ENCODE measurements at regions of chr2 and their contacts with region 1.

Region 1: GRCh38 chr2:38947240-38948239 is 57.9 kb downstream of the ARHGEF33 start:
- DNase-seq: peak; percentile 88
- H3K4me3 Mint-ChIP-seq: no peak overlapping the region
- H3K27ac Mint-ChIP-seq: peak overlapping the region; percentile 32
- H3K4me1 Mint-ChIP-seq: peaks cover 8% of the 10 kb centered on the region
- H3K27me3 Mint-ChIP-seq: no peaks in the 10 kb centered on the region
- CTCF ChIP-seq: peak; percentile 71

Region 2: DNA sequence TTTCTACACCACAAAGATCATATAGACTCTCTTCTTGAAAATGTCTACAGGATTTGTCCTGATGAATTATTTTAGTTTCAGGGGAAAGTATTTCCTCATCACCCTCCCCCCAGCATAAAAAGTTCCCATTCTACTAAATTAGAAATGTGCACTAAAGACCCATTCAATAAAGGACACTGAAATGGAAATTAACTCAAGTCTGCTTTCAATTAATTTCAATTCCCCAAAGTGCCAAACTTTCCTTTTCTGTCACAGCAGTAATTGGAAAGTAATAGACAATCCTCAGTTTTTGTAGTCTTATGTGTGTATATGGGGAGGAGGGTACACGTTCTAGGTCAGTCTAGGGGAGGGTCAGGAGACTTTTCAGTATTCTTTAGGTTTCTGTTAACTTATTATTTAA is 36.3 kb before region 1 on chr2:
- CTCF ChIA-PET with region 1: interaction called, 10 read pairs
- POLR2A ChIA-PET with region 1: no interaction called
- intact Hi-C with region 1: no loop called
- DNase-seq: no peak
- H3K4me3 Mint-ChIP-seq: no peak overlapping the region
- H3K27ac Mint-ChIP-seq: no peak overlapping the region
- H3K4me1 Mint-ChIP-seq: peaks cover 5% of the 10 kb centered on the region
- H3K27me3 Mint-ChIP-seq: no peaks in the 10 kb centered on the region
- CTCF ChIP-seq: no peak

Region 3: GRCh38 chr2:38957972-38958371 is 10.4 kb after region 1 on chr2:
- CTCF ChIA-PET with region 1: interaction called, 13 read pairs
- POLR2A ChIA-PET with region 1: interaction called, 3 read pairs
- intact Hi-C with region 1: no loop called
- DNase-seq: no peak
- H3K4me3 Mint-ChIP-seq: no peak overlapping the region
- H3K27ac Mint-ChIP-seq: no peak overlapping the region
- H3K4me1 Mint-ChIP-seq: no peaks in the 10 kb centered on the region
- H3K27me3 Mint-ChIP-seq: no peaks in the 10 kb centered on the region
- CTCF ChIP-seq: no peak

Region 4: GRCh38 chr2:39008665-39009064 is 61.1 kb after region 1 on chr2:
- CTCF ChIA-PET with region 1: interaction called, 13 read pairs
- POLR2A ChIA-PET with region 1: no interaction called
- intact Hi-C with region 1: no loop called
- DNase-seq: no peak
- H3K4me3 Mint-ChIP-seq: no peak overlapping the region
- H3K27ac Mint-ChIP-seq: peak overlapping the region; percentile 54
- H3K4me1 Mint-ChIP-seq: peaks cover 5% of the 10 kb centered on the region
- H3K27me3 Mint-ChIP-seq: no peaks in the 10 kb centered on the region
- CTCF ChIP-seq: no peak

Region 5: GRCh38 chr2:39227628-39228412 is 280.3 kb after region 1 on chr2:
- CTCF ChIA-PET with region 1: interaction called, 94 read pairs
- POLR2A ChIA-PET with region 1: no interaction called
- intact Hi-C with region 1: loop called (anchors 1 kb)
- DNase-seq: peak; percentile 65
- H3K4me3 Mint-ChIP-seq: no peak overlapping the region
- H3K27ac Mint-ChIP-seq: no peak overlapping the region
- H3K4me1 Mint-ChIP-seq: peaks cover 5% of the 10 kb centered on the region
- H3K27me3 Mint-ChIP-seq: no peaks in the 10 kb centered on the region
- CTCF ChIP-seq: peak; percentile 71

Measured in MCF 10A (cell line).